Calu3 (cell line): ENCODE measurements at regions of chr1 and their contacts with region 1.

Region 1: DNA sequence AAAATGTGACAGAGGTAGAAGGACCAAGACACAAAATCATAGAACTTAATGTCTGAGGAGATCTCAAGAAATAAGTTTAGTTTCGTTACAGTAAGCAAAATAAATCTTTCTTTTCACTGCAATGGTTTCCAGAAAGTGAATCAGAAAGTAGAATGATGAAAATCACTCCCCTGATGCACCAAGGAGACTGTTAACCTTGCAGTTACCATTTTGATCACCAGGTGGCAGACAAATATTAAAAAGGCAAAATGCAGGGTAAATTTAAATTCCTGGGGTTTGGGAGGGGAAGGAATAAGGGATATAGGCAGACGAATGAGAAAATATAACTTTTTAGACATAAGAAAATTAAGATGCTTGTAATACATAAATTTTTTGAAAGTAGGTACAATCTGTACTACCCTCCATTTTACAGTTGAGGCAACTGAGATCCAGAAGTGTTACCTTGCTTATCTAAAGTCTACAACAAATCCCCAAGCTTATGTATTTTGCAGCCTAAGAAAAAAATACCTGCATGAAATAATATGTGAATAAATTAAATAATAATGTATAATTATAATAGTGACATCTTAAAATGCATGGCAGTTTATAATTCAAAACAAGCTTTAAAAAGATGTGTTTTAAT is 253.2 kb downstream of the CRB1 start:
- DNase-seq: peak; percentile 51
- H3K4me3 Mint-ChIP-seq: no peak overlapping the region
- H3K27ac Mint-ChIP-seq: no peak overlapping the region
- H3K4me1 Mint-ChIP-seq: no peaks in the 10 kb centered on the region
- H3K27me3 Mint-ChIP-seq: no peaks in the 10 kb centered on the region
- CTCF ChIP-seq: peak; percentile 72

Region 2: GRCh38 chr1:197200272-197200899 is 320.8 kb before region 1 on chr1:
- CTCF ChIA-PET with region 1: no interaction called
- intact Hi-C with region 1: no loop called
- DNase-seq: no peak
- H3K4me3 Mint-ChIP-seq: peak overlapping the region; percentile 90
- H3K27ac Mint-ChIP-seq: peak overlapping the region; percentile 88
- H3K4me1 Mint-ChIP-seq: peaks cover 40% of the 10 kb centered on the region
- H3K27me3 Mint-ChIP-seq: no peaks in the 10 kb centered on the region
- CTCF ChIP-seq: no peak

Region 3: GRCh38 chr1:197399755-197400527 is 121.3 kb before region 1 on chr1:
- CTCF ChIA-PET with region 1: interaction called, 7 read pairs
- intact Hi-C with region 1: loop called (anchors 5 kb)
- DNase-seq: peak; percentile 52
- H3K4me3 Mint-ChIP-seq: no peak overlapping the region
- H3K27ac Mint-ChIP-seq: no peak overlapping the region
- H3K4me1 Mint-ChIP-seq: peaks cover 9% of the 10 kb centered on the region
- H3K27me3 Mint-ChIP-seq: no peaks in the 10 kb centered on the region
- CTCF ChIP-seq: peak; percentile 60

Region 4: GRCh38 chr1:197868751-197869489 is 347.7 kb after region 1 on chr1:
- CTCF ChIA-PET with region 1: no interaction called
- intact Hi-C with region 1: loop called (anchors 5 kb)
- DNase-seq: peak; percentile 62
- H3K4me3 Mint-ChIP-seq: no peak overlapping the region
- H3K27ac Mint-ChIP-seq: no peak overlapping the region
- H3K4me1 Mint-ChIP-seq: peaks cover 1% of the 10 kb centered on the region
- H3K27me3 Mint-ChIP-seq: no peaks in the 10 kb centered on the region
- CTCF ChIP-seq: peak; percentile 68

Region 5: GRCh38 chr1:197924516-197925123 is 403.4 kb after region 1 on chr1:
- CTCF ChIA-PET with region 1: no interaction called
- intact Hi-C with region 1: loop called (anchors 5 kb)
- DNase-seq: peak; percentile 60
- H3K4me3 Mint-ChIP-seq: no peak overlapping the region
- H3K27ac Mint-ChIP-seq: no peak overlapping the region
- H3K4me1 Mint-ChIP-seq: peaks cover 49% of the 10 kb centered on the region
- H3K27me3 Mint-ChIP-seq: no peaks in the 10 kb centered on the region
- CTCF ChIP-seq: peak; percentile 51

Region 6: GRCh38 chr1:198699167-198700015 is 1178.2 kb after region 1 on chr1:
- CTCF ChIA-PET with region 1: no interaction called
- intact Hi-C with region 1: loop called (anchors 1 kb)
- DNase-seq: peak; percentile 82
- H3K4me3 Mint-ChIP-seq: peak overlapping the region; percentile 33
- H3K27ac Mint-ChIP-seq: peak overlapping the region; percentile 84
- H3K4me1 Mint-ChIP-seq: peaks cover 24% of the 10 kb centered on the region
- H3K27me3 Mint-ChIP-seq: no peaks in the 10 kb centered on the region
- CTCF ChIP-seq: peak; percentile 90